Naive thymus-derived CD4-positive, alpha-beta T cell (primary cell): ENCODE measurements at regions of chr6 and their contacts with region 1.

Region 1: GRCh38 chr6:152301764-152302568 is 335.2 kb downstream of the SYNE1 start:
- DNase-seq: peak; percentile 76 to 91 (median 87)
- ATAC-seq: peak; percentile 98
- H3K4me3 ChIP-seq: peak overlapping the region; percentile 84
- H3K4me3 Mint-ChIP-seq: peak overlapping the region; percentile 87 to 100 (median 100)
- H3K27ac ChIP-seq: peak overlapping the region; percentile 85
- H3K27ac Mint-ChIP-seq: peak overlapping the region; percentile 92 to 100 (median 99)
- H3K4me1 ChIP-seq: peaks cover 12 to 14% of the 10 kb centered on the region in 2 donors
- H3K4me1 Mint-ChIP-seq: peaks cover 22 to 49% (median 40%) of the 10 kb centered on the region in 7 donors
- H3K27me3 ChIP-seq: no peaks in the 10 kb centered on the region
- H3K27me3 Mint-ChIP-seq: no peaks in the 10 kb centered on the region

Region 2: DNA sequence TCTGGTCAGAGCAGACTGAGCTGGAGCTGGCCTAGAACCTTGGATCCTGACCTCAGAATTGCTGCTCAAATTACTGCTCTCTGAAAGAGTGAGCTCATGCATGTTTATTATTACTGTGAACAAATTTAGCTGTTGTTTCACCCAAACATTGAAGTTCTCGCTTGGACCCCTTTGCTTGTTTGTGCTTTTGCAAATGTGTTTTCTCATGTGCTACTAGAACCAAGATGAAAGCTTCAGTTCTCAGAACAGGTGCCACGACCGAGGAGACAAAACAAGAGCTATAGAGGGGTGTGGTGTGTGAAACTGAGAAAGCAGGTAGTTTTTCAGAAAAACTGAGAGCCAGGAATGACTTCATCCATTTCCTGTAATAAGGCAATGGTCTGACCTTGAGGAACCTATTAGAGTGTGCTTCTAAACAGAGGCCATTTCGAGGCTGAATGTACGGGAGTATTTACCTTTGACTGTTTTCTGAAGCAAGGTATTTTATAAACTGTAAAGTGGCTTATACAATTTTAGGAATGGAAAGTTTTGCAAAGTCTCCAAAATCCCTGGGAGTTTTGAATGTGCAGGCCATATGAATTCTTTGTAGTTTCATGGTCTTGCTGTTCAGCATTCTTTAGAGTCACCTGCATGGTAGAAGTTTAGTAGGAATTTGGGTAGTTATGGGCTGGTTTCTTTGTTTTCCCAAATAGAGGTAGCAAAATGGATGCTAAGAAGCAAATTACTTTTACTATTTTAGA is 544.3 kb before region 1 on chr6:
- CTCF ChIA-PET with region 1: no interaction called
- POLR2A ChIA-PET with region 1: no interaction called
- intact Hi-C with region 1: loop called in 1 of 2 experiments (anchors 2 kb)
- DNase-seq: peak in 4 of 9 donors; percentile 10 to 30 (median 19)
- ATAC-seq: peak; percentile 44
- H3K4me3 ChIP-seq: no peak overlapping the region
- H3K4me3 Mint-ChIP-seq: peak overlapping the region in 8 of 10 donors; percentile 6 to 66 (median 32)
- H3K27ac ChIP-seq: peak overlapping the region; percentile 23
- H3K27ac Mint-ChIP-seq: peak overlapping the region; percentile 49 to 98 (median 84)
- H3K4me1 ChIP-seq: peaks cover 6 to 13% of the 10 kb centered on the region in 2 donors
- H3K4me1 Mint-ChIP-seq: peaks cover 10 to 50% (median 25%) of the 10 kb centered on the region in 7 donors
- H3K27me3 ChIP-seq: no peaks in the 10 kb centered on the region
- H3K27me3 Mint-ChIP-seq: peaks cover 0 to 3% (median 0%) of the 10 kb centered on the region in 5 donors

Region 3: GRCh38 chr6:152184917-152185574 is 116.9 kb before region 1 on chr6:
- CTCF ChIA-PET with region 1: no interaction called
- POLR2A ChIA-PET with region 1: interaction called, 11 read pairs
- intact Hi-C with region 1: loop called in 1 of 2 experiments (anchors 2 kb)
- DNase-seq: peak in 7 of 9 donors; percentile 25 to 78 (median 66)
- ATAC-seq: peak; percentile 77
- H3K4me3 ChIP-seq: peak overlapping the region; percentile 56
- H3K4me3 Mint-ChIP-seq: peak overlapping the region; percentile 87 to 99 (median 96)
- H3K27ac ChIP-seq: peak overlapping the region; percentile 71
- H3K27ac Mint-ChIP-seq: peak overlapping the region; percentile 95 to 100 (median 99)
- H3K4me1 ChIP-seq: peaks cover 37 to 48% of the 10 kb centered on the region in 2 donors
- H3K4me1 Mint-ChIP-seq: peaks cover 46 to 92% (median 75%) of the 10 kb centered on the region in 7 donors
- H3K27me3 ChIP-seq: no peaks in the 10 kb centered on the region
- H3K27me3 Mint-ChIP-seq: no peaks in the 10 kb centered on the region

Region 4: DNA sequence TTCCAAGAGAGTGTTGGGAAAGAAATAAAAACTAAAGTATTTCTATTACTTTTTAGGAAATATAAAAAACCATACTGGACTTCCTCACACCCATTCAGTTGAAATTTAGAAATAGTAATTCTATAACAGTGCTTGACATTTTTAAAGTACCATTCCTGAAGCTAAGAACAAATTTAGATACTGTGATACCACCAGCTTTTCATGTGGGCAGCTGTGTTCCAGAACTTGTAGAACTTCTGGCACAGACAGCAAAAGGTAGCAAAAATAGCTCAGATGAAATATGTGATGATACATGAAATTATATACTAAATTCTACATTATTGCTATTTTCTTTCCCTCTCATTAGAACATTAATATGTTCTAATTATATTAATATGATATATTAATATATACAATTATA is 11.3 kb before region 1 on chr6:
- CTCF ChIA-PET with region 1: interaction called, 7 read pairs
- POLR2A ChIA-PET with region 1: interaction called, 5 read pairs
- intact Hi-C with region 1: loop called in 1 of 2 experiments (anchors 2 kb)
- DNase-seq: no peak
- ATAC-seq: no peak
- H3K4me3 ChIP-seq: no peak overlapping the region
- H3K4me3 Mint-ChIP-seq: no peak overlapping the region
- H3K27ac ChIP-seq: no peak overlapping the region
- H3K27ac Mint-ChIP-seq: no peak overlapping the region
- H3K4me1 ChIP-seq: no peaks in the 10 kb centered on the region
- H3K4me1 Mint-ChIP-seq: peaks cover 0 to 20% (median 7%) of the 10 kb centered on the region in 7 donors
- H3K27me3 ChIP-seq: no peaks in the 10 kb centered on the region
- H3K27me3 Mint-ChIP-seq: no peaks in the 10 kb centered on the region

Region 5: GRCh38 chr6:152338335-152339125 is 36.6 kb after region 1 on chr6:
- CTCF ChIA-PET with region 1: interaction called, 47 read pairs
- POLR2A ChIA-PET with region 1: interaction called, 13 read pairs
- intact Hi-C with region 1: loop called (anchors 1 kb)
- DNase-seq: peak; percentile 23 to 67 (median 51)
- ATAC-seq: peak; percentile 90
- H3K4me3 ChIP-seq: no peak overlapping the region
- H3K4me3 Mint-ChIP-seq: no peak overlapping the region
- H3K27ac ChIP-seq: no peak overlapping the region
- H3K27ac Mint-ChIP-seq: no peak overlapping the region
- H3K4me1 ChIP-seq: no peaks in the 10 kb centered on the region
- H3K4me1 Mint-ChIP-seq: peaks cover 0 to 5% (median 0%) of the 10 kb centered on the region in 7 donors
- H3K27me3 ChIP-seq: no peaks in the 10 kb centered on the region
- H3K27me3 Mint-ChIP-seq: peaks cover 0 to 11% (median 0%) of the 10 kb centered on the region in 5 donors

Region 6: GRCh38 chr6:152534541-152534940 is 232.6 kb after region 1 on chr6:
- CTCF ChIA-PET with region 1: no interaction called
- POLR2A ChIA-PET with region 1: no interaction called
- intact Hi-C with region 1: no loop called
- DNase-seq: no peak
- ATAC-seq: no peak
- H3K4me3 ChIP-seq: no peak overlapping the region
- H3K4me3 Mint-ChIP-seq: no peak overlapping the region
- H3K27ac ChIP-seq: no peak overlapping the region
- H3K27ac Mint-ChIP-seq: no peak overlapping the region
- H3K4me1 ChIP-seq: no peaks in the 10 kb centered on the region
- H3K4me1 Mint-ChIP-seq: peaks cover 0 to 2% (median 0%) of the 10 kb centered on the region in 7 donors
- H3K27me3 ChIP-seq: no peaks in the 10 kb centered on the region
- H3K27me3 Mint-ChIP-seq: peaks cover 0 to 22% (median 4%) of the 10 kb centered on the region in 5 donors

Region 7: DNA sequence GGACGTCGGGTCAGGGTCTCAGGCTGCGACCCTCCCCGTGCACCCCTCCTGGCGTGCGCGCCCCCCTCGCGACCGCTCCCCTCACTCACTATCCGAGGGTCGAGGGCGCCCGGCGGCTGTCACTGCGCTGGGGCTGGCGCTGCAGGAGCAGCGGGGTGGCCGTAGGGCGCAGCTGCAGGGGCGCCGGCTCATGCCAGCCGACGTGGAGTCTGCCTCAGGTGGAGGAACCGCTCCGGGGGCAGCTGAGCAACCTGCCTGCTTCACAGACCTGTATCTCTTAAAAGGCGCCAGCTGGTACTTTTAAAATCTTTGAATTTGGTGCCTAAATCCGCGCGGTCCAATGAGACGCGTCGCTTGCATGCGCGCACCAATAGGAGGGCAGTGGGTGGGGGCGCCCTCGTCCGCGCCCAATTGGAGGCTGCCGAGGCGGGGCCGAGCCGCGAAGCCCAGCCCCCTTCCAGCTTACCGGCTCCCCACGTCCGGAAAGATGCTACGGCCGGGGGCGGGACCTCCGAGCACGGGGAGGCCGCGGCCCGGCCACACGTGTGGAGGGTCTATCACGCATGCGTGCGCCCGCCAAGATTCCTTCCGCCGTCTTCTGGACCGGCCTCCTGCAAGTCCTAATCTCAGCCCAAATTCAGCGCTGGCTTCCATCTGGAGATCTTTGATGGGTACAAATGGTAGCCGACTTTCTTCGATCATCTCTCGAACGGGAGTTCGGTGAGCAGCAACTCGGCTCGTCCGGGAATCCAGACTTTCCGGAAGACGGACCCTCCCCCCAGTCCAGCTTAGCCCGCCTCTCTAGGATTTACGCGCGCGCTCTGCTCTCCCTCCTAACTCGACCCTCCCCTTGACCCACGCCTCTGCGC is 681.0 kb after region 1 on chr6 and contains the start of gene FBXO5:
- CTCF ChIA-PET with region 1: no interaction called
- POLR2A ChIA-PET with region 1: interaction called, 3 read pairs
- intact Hi-C with region 1: loop called (anchors 2 kb)
- DNase-seq: peak; percentile 94 to 98 (median 96)
- ATAC-seq: peak; percentile 97
- H3K4me3 ChIP-seq: peak within 1 kb of the TSS; percentile 94
- H3K4me3 Mint-ChIP-seq: peak within 1 kb of the TSS; percentile 92 to 100 (median 96)
- H3K27ac ChIP-seq: peak within 1 kb of the TSS; percentile 89
- H3K27ac Mint-ChIP-seq: peak within 1 kb of the TSS; percentile 87 to 99 (median 95)
- H3K4me1 ChIP-seq: peaks cover 10 to 20% of the 10 kb centered on the region in 2 donors
- H3K4me1 Mint-ChIP-seq: peaks cover 33 to 58% (median 43%) of the 10 kb centered on the region in 7 donors
- H3K27me3 ChIP-seq: no peaks in the 10 kb centered on the region
- H3K27me3 Mint-ChIP-seq: no peaks in the 10 kb centered on the region
- total RNA-seq, gene FBXO5: 3.2 to 50.2 (median 9.2) TPM